BJ (cell line): ENCODE measurements at regions of chr21 and their contacts with region 1.

Region 1: DNA sequence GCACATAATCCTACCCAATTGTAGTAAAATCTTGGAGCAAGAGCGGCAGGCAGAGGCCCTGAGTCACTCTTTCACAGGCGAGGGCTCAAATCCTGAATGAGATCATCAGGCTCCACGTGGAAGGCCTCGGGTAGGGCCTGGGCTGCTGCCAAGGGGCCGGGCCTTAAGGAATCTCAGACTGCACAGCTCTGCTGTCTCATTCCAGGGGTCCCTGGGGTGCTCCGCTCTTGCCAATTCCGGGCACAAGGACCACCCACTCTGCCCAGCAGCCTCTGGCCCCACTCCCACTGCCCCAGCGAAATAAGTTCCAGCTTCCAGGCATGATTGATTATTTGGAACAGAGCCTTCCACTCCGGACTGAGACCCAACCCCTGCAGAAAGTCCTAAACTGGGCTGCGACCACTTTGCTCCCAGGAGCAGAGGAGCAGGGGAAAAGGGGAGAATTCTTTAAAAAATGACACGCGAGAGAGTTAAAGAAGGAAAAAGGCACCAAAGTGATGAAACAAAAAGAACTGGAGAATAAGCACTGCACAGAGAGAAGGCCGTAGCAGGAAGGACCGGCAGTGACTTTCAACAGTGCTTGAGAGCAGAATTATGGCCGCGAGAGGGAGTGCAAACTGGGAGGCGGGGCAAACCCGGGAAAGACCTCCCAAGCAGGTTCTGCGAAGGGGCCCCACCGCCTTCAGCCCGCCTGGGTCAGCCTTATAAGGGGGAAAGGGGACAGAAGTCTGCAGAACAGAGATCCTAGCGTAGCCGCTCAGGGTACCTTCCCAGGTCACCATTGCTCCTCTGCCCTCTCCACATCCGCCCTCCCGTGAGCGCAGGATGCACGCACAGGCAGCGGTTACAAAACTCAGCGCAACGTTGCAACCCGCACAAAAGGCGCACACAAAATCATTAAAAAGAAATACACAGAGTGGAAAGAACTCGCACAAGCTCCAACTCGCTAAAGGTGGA is 2.0 kb downstream of the ADAMTS1 start:
- DNase-seq: peak; percentile 70
- H3K4me3 ChIP-seq: peak overlapping the region; percentile 96
- H3K27me3 ChIP-seq: no peaks in the 10 kb centered on the region
- CTCF ChIP-seq: no peak; the same call in 1 of the 2 replicates

Region 2: DNA sequence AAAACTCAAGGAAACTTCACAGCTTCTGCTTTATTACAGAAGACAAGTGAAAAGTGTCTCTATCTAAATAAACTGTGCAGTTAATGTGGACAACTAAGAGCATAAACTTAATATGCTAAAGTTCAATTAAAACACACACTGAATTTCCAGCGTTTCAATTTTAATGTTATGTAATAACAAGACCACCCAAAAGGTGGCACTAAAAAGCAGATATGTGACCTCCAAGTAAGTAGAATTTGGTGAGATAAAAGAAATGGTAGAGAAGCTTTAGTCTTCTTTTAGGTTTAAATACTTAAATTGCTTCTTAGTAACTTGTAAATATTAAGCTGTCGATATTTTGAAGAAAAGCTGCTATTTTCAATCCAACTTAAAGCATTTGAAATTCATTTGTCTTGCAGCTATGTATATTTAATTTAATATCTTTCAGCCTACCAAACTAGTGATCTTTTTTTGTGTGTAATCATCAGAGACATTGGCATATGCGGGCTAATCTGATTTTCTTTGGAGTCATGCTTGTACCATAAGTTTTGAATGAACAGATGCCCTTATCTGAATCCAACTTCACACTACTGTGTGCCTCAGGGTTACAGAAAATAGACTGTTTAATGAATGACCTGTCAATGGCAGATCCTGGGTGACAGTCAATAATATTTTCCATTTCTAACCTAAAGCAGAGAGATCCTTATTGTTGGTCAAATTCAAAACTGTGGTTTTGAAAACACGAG is 38.4 kb after region 1 on chr21:
- CTCF ChIA-PET with region 1: no interaction called
- POLR2A ChIA-PET with region 1: no interaction called
- DNase-seq: no peak
- H3K4me3 ChIP-seq: no peak overlapping the region
- H3K27me3 ChIP-seq: no peaks in the 10 kb centered on the region
- CTCF ChIP-seq: peak; percentile 39; the same call in 1 of the 2 replicates

Region 3: GRCh38 chr21:27700974-27701614 is 857.8 kb after region 1 on chr21:
- CTCF ChIA-PET with region 1: interaction called, 29 read pairs
- POLR2A ChIA-PET with region 1: no interaction called
- DNase-seq: no peak
- H3K4me3 ChIP-seq: no peak overlapping the region
- H3K27me3 ChIP-seq: no peaks in the 10 kb centered on the region
- CTCF ChIP-seq: peak; percentile 83

Region 4: GRCh38 chr21:28607545-28607944 is 1764.3 kb after region 1 on chr21:
- CTCF ChIA-PET with region 1: no interaction called
- POLR2A ChIA-PET with region 1: interaction called, 17 read pairs
- DNase-seq: no peak
- H3K4me3 ChIP-seq: no peak overlapping the region
- H3K27me3 ChIP-seq: no peaks in the 10 kb centered on the region
- CTCF ChIP-seq: no peak